ENCODE measurements at regions of chr14 and their contacts with region 1.

Region 1: GRCh38 chr14:35140718-35141581 is 18.6 kb downstream of the PRORP start:
- DNase-seq: no peak
- H3K4me3 ChIP-seq: no peak overlapping the region
- H3K27ac ChIP-seq: no peak overlapping the region
- H3K4me1 ChIP-seq: no peaks in the 10 kb centered on the region
- H3K27me3 ChIP-seq: no peaks in the 10 kb centered on the region
- CTCF ChIP-seq: peak in 1 of 3 donors; percentile 36
- POLR2A ChIP-seq: no peak

Region 2: DNA sequence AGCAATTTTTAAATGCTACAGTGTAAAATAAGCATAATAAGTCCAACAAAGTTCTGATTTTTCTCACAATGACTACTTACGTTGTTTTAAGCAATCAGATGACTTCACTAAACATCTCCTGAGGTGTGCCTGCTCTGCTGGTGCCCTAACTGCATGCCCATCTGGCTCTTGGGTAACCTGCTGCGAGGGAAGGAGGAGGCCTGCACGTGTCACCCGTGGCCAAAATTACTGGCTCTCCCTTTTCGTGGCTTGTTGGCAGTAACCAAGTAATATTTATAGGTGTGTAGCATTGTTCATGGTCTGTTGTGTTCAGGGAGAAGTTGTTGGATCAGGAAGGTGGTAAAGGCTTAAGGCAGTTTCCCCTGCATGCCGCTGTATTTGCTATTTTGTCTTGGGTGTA is 269.9 kb after region 1 on chr14:
- intact Hi-C with region 1: loop called (anchors 2 kb)
- DNase-seq: no peak
- H3K4me3 ChIP-seq: no peak overlapping the region
- H3K27ac ChIP-seq: no peak overlapping the region
- H3K4me1 ChIP-seq: peaks cover 0 to 9% of the 10 kb centered on the region in 2 donors
- H3K27me3 ChIP-seq: no peaks in the 10 kb centered on the region
- CTCF ChIP-seq: no peak
- POLR2A ChIP-seq: no peak